ENCODE measurements at regions of chr7 and their contacts with region 1.

Region 1: DNA sequence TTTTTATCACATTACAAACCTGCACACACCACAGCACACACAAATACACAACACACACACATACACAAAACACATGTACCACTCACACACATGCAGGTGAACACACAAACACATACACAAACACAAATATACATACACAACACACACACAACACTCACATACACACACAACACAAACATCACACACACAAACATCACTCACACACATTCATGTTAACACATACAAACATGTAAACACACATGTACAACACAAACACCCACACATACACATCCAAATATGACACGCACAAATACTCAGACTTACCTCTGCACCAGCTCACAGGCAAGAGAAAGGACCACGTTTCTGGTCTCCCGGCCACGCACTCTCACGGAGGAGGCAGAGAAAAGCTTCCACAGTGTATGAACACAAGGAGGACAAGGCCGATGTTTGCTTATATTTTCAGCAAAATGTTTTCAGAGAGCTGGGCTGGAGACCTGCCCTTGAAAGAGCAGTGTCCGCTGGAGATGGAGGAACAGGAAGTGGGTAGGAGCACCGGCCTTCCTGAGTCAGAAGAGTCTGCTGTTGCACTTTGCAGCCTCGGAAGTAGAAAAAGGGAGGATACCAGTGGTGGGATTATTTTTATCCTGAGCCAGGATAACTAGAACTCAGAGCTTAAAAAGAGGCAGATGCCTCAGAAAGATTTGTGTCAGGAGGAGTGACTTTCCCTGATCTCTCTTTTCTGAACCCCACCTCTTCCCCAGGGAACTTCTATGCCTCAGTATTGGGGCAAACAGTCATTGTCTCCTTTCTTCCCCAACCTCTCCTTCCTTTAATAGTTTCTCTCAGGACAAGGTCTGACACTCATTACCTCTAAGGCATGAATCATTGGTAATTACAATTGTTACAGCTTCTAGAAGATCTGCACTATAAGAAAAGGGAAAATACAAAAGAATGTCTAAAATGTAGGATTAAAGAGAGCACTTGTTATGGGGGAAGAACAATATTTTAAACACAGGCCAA is at the start of gene GIMAP6:
- DNase-seq: peak; percentile 51
- ATAC-seq: peak; percentile 88
- H3K4me3 ChIP-seq: peak within 1 kb of the TSS; percentile 85
- H3K27ac ChIP-seq: peak within 1 kb of the TSS; percentile 78
- H3K4me1 ChIP-seq: peaks cover 7% of the 10 kb centered on the region
- H3K27me3 ChIP-seq: no peaks in the 10 kb centered on the region
- CTCF ChIP-seq: no peak
- EP300 ChIP-seq: no peak
- POLR2A ChIP-seq: peak; percentile 57; the same call in 1 of the 2 replicates
- RAD21 ChIP-seq: peak; percentile 40
- polyA plus RNA-seq, gene GIMAP6: 6.2 to 8.3 TPM

Region 2: DNA sequence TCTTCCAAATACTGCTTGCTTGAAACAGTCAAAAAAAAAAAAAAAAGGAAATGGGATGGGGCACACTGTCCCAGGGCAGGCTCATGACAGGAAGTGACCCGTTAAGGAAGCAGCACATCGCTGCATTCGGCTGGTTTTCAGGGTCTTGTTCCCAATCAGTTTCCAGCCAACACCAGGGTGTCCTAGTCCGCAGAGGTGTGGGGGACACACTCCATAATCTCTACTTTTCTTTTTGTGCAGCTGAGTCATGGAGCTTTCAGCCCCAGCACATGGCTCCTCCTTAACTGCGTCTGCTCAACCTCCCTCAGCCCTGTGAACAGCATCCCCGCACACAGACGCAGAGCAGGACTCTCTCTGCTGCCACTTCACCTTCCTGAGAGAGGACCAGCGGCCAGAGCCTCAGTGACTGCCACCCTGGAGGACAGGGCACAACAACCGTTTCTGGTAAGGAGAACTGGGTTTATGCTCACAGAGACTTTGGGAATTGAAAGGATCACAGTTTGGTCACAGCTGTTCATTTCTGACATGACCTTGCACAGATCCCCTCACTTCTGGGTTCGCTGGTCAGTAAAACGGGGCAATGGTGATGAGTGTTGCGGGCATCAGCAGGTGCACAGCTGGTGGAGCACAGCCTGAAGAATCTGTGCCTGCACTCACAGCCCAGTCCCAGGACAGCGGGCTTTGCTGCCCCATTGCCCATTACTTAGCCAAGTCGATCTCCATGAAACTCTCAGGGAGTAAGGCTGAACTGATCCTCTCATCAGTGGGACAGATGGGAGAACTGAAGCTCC is 105.3 kb after region 1 on chr7 and contains the start of gene GIMAP5:
- CTCF ChIA-PET with region 1: no interaction called
- POLR2A ChIA-PET with region 1: no interaction called
- RAD21 ChIA-PET with region 1: no interaction called
- SMC1A ChIA-PET with region 1: no interaction called
- in situ Hi-C with region 1: no loop called
- intact Hi-C with region 1: loop called (anchors 5 kb)
- DNase-seq: no peak
- ATAC-seq: peak; percentile 79
- H3K4me3 ChIP-seq: peak within 1 kb of the TSS; percentile 87
- H3K27ac ChIP-seq: peak within 1 kb of the TSS; percentile 80
- H3K4me1 ChIP-seq: peaks cover 32% of the 10 kb centered on the region
- H3K27me3 ChIP-seq: no peaks in the 10 kb centered on the region
- CTCF ChIP-seq: no peak
- EP300 ChIP-seq: no peak
- POLR2A ChIP-seq: peak; percentile 76
- RAD21 ChIP-seq: no peak
- polyA plus RNA-seq, gene GIMAP5: 4.2 to 4.4 TPM